Activated CD8-positive, alpha-beta T cell treated with anti-CD3 and anti-CD28 coated beads, Interleukin-2, amount 10 ng/mL, durations not matched to agents 7 days and 5 days (primary cell): ENCODE measurements at regions of chr13 and their contacts with region 1.

Region 1: GRCh38 chr13:30158774-30159445 is 148.4 kb downstream of the KATNAL1 start:
- DNase-seq: no peak
- ATAC-seq: peak; percentile 58
- H3K4me3 Mint-ChIP-seq: no peak overlapping the region
- H3K27ac Mint-ChIP-seq: no peak overlapping the region
- H3K4me1 Mint-ChIP-seq: peaks cover 21% of the 10 kb centered on the region
- H3K27me3 Mint-ChIP-seq: peaks cover 3% of the 10 kb centered on the region

Region 2: DNA sequence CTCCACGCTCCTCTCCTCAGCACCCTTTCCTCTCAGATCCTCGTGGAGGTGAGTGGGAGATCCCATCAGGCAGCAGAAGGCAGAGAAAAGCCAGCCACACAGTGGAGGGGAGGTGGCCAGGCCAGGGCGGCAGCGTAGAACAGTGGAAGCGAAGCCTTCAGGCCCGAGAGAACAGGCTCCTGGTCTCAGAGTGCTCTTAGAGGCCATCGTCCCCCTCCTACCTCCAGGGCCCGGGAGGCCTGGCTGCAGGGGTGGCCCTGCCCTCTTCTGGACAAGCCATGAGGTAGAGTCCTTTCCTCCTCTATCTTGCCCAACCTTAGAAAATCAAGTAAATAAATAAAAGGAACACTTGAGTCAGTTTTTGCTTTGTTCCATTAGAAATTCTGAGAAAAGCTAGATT is 53.5 kb before region 1 on chr13:
- CTCF ChIA-PET with region 1: no interaction called
- POLR2A ChIA-PET with region 1: no interaction called
- DNase-seq: no peak
- ATAC-seq: no peak
- H3K4me3 Mint-ChIP-seq: no peak overlapping the region
- H3K27ac Mint-ChIP-seq: no peak overlapping the region
- H3K4me1 Mint-ChIP-seq: no peaks in the 10 kb centered on the region
- H3K27me3 Mint-ChIP-seq: peaks cover 23% of the 10 kb centered on the region

Region 3: GRCh38 chr13:30125422-30126073 is 33.4 kb before region 1 on chr13:
- CTCF ChIA-PET with region 1: interaction called, 104 read pairs
- POLR2A ChIA-PET with region 1: no interaction called
- DNase-seq: no peak
- ATAC-seq: no peak
- H3K4me3 Mint-ChIP-seq: no peak overlapping the region
- H3K27ac Mint-ChIP-seq: no peak overlapping the region
- H3K4me1 Mint-ChIP-seq: peaks cover 21% of the 10 kb centered on the region
- H3K27me3 Mint-ChIP-seq: no peaks in the 10 kb centered on the region

Region 4: DNA sequence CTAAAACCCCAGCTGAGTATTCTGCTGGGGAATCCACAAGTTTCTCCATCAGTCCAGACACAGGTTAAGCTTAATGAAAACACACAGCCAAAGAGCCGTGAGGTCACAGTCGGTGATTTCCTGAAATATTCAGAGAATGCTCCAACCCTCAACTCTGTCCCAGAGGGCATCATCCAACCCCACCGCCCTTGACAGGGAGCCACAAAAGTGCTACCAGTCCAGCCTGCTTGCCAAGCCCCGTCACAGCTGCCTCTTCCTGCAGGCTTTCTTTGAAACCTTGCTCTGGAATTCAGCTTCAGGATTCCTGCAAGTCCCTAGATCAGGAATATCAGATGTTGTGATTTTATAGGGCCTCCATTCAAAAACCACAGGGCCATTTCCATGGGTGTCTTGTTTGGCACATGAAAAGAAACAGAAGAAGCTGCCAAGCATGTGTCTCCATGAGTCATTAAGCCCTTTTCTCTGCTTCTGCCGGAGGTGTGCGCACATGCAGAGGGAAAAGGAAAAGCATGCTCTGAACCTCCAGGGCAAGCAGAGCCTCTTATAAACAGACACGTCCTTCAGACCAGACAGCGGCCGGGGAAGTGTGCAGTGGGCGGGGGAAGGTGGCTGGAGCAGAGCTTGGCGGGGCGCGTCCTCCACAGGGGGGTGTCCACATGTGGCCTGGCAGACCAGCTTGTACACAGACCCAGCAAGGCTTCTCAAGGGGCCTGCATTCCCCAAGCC is 16.3 kb before region 1 on chr13:
- CTCF ChIA-PET with region 1: interaction called, 45 read pairs
- POLR2A ChIA-PET with region 1: interaction called, 4 read pairs
- DNase-seq: no peak
- ATAC-seq: no peak
- H3K4me3 Mint-ChIP-seq: no peak overlapping the region
- H3K27ac Mint-ChIP-seq: peak overlapping the region; percentile 14
- H3K4me1 Mint-ChIP-seq: peaks cover 46% of the 10 kb centered on the region
- H3K27me3 Mint-ChIP-seq: peaks cover 10% of the 10 kb centered on the region

Region 5: DNA sequence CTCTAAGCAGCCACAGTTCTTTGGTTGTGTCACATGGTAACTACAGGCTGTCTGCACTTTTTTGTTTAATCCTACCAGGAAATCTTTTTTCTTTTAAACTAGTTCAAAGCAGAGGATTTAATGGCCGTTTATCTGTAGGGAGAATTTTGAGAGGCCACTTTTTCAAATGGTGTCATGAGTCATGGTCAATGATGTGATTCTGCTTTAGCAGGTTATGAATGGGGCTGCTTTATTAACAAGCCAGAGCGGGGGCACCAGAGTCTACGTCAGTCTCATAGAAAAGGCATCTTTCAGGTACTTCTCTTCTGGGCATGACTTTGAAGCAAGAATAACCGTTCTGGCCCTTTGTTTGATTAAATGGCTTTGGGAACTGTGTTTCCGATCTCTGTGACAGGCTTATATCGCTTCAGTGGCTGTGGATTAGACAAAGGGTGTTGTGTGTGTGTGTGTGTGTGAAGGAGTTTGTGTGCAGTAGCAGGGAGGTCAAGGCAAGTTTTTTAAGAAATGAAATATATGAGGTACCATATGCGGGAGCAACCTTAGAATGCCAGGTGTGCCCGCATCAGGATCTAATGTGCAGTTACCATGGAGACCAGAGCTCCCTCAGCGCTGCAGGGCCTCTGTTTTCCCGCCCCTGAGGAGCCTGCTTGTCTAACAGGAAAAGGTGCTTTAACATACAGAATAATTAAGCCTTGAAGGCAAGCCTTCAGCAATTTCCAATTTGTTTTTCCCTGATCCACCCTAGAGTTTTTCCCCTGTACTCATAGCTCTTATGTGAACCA is 27.9 kb after region 1 on chr13:
- CTCF ChIA-PET with region 1: no interaction called
- POLR2A ChIA-PET with region 1: no interaction called
- DNase-seq: no peak
- ATAC-seq: no peak
- H3K4me3 Mint-ChIP-seq: no peak overlapping the region
- H3K27ac Mint-ChIP-seq: no peak overlapping the region
- H3K4me1 Mint-ChIP-seq: no peaks in the 10 kb centered on the region
- H3K27me3 Mint-ChIP-seq: no peaks in the 10 kb centered on the region